ENCODE measurements at regions of chr14 and their contacts with region 1.

Region 1: GRCh38 chr14:30993071-30993470 is 32.4 kb upstream of the AP4S1 start:
- DNase-seq: no peak
- ATAC-seq: no peak
- H3K4me3 ChIP-seq: no peak overlapping the region
- H3K27ac ChIP-seq: no peak overlapping the region
- H3K4me1 ChIP-seq: peaks cover 49% of the 10 kb centered on the region
- CTCF ChIP-seq: no peak
- EP300 ChIP-seq: no peak
- POLR2A ChIP-seq: no peak
- RAD21 ChIP-seq: no peak

Region 2: DNA sequence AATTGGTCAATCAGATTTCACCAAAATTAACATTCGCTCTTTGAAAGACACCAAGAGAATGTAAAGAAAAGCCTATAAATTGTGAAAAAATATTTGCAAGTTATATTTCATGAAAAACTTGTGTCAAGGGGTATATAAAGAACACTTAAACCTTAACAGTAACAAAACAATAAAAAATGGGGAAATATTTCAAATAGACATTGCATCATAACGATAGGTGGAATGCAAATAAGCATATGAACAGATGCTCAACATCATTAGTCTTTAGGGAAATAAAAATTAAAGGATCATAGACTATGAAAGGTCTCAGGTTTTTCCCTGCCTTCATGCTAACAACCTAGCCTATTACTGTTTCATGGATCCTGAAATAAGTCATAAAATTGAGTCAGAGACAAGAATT is 54.5 kb before region 1 on chr14:
- CTCF ChIA-PET with region 1: no interaction called
- POLR2A ChIA-PET with region 1: no interaction called
- DNase-seq: no peak
- ATAC-seq: no peak
- H3K4me3 ChIP-seq: no peak overlapping the region
- H3K27ac ChIP-seq: no peak overlapping the region
- H3K4me1 ChIP-seq: no peaks in the 10 kb centered on the region
- CTCF ChIP-seq: no peak
- EP300 ChIP-seq: no peak
- POLR2A ChIP-seq: no peak
- RAD21 ChIP-seq: no peak

Region 3: GRCh38 chr14:30949651-30950050 is 43.4 kb before region 1 on chr14:
- CTCF ChIA-PET with region 1: no interaction called
- POLR2A ChIA-PET with region 1: no interaction called
- DNase-seq: no peak
- ATAC-seq: no peak
- H3K4me3 ChIP-seq: no peak overlapping the region
- H3K27ac ChIP-seq: no peak overlapping the region
- H3K4me1 ChIP-seq: no peaks in the 10 kb centered on the region
- CTCF ChIP-seq: no peak
- EP300 ChIP-seq: no peak
- POLR2A ChIP-seq: no peak
- RAD21 ChIP-seq: no peak

Region 4: GRCh38 chr14:30982533-30982932 is 10.5 kb before region 1 on chr14:
- CTCF ChIA-PET with region 1: interaction called, 15 read pairs
- POLR2A ChIA-PET with region 1: no interaction called
- DNase-seq: no peak
- ATAC-seq: no peak
- H3K4me3 ChIP-seq: no peak overlapping the region
- H3K27ac ChIP-seq: no peak overlapping the region
- H3K4me1 ChIP-seq: peaks cover 18% of the 10 kb centered on the region
- CTCF ChIP-seq: no peak
- EP300 ChIP-seq: no peak
- POLR2A ChIP-seq: no peak
- RAD21 ChIP-seq: no peak